ENCODE measurements at regions of chr14 and their contacts with region 1.

Region 1: DNA sequence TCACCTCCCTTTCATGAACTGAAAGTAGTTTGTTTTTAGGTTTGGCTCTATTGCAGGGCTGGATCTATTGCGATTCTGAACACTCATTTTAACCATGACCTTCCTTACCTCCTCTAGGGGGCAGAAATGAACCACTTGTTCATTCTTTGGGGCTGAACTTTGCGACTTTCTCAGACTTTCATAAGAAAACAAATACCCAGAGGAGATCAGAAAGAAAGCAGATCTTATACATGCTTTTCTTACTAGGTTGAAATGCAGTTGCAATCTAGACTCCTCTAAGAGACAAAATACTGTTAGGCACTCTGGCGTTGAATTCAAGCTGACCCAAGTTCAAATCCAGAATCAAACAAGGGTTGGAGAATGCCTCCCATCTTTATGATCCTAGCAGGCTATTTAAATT is 32.6 kb upstream of the PLEKHG3 start:
- DNase-seq: no peak
- ATAC-seq: peak; percentile 50 to 54
- H3K4me3 ChIP-seq: no peak overlapping the region
- H3K27ac ChIP-seq: no peak overlapping the region
- H3K4me1 ChIP-seq: peaks cover 0 to 7% of the 10 kb centered on the region in 2 donors
- H3K27me3 ChIP-seq: no peaks in the 10 kb centered on the region
- CTCF ChIP-seq: peak; percentile 33 to 68 (median 54)
- POLR2A ChIP-seq: no peak

Region 2: DNA sequence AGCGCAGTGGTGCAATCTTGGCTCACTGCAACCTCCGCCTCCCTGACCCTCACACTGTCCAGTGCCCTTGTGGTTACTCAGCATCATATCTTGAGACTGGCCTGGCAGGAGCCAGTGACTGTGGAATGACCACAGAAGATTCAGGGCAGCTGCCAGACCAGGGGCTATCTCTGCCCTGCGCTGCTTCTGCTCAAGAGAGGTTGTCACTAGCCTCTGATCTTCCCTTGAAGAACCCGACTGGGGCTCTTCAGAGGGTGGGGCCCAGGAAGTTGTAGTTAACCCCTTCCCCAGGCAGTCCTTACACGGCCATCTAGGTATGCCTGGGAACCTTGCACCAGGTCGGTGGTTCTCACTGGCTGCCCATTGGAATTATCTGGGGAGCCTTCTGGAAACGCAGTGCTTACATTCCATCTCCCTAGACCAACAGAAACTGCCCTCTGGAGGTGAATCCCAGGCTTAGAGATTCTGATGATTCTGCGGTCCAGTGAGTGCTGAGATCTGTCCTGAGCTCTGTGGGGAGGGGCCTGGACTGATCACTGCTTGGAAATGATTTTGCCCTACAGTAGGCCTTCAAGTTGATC is 74.0 kb after region 1 on chr14:
- in situ Hi-C with region 1: no loop called
- intact Hi-C with region 1: loop called (anchors 5 kb)
- DNase-seq: peak in 1 of 2 donors; percentile 46
- ATAC-seq: peak; percentile 20 to 71
- H3K4me3 ChIP-seq: no peak overlapping the region
- H3K27ac ChIP-seq: peak overlapping the region in 3 of 4 donors; percentile 12 to 52 (median 40)
- H3K4me1 ChIP-seq: peaks cover 10 to 11% of the 10 kb centered on the region in 2 donors
- H3K27me3 ChIP-seq: no peaks in the 10 kb centered on the region
- CTCF ChIP-seq: no peak
- POLR2A ChIP-seq: no peak

Region 3: GRCh38 chr14:64758691-64759584 is 87.3 kb after region 1 on chr14:
- in situ Hi-C with region 1: loop called (anchors 5 to 10 kb)
- intact Hi-C with region 1: loop called (anchors 2 kb)
- DNase-seq: no peak
- ATAC-seq: no peak
- H3K4me3 ChIP-seq: no peak overlapping the region
- H3K27ac ChIP-seq: peak overlapping the region in 2 of 4 donors; percentile 2 to 38
- H3K4me1 ChIP-seq: peaks cover 38 to 62% of the 10 kb centered on the region in 2 donors
- H3K27me3 ChIP-seq: no peaks in the 10 kb centered on the region
- CTCF ChIP-seq: no peak
- POLR2A ChIP-seq: no peak

Region 4: GRCh38 chr14:64764641-64765520 is 93.3 kb after region 1 on chr14:
- in situ Hi-C with region 1: loop called in 3 of 4 experiments (anchors 5 to 10 kb)
- intact Hi-C with region 1: loop called (anchors 2 kb)
- DNase-seq: peak in 1 of 2 donors; percentile 51
- ATAC-seq: peak in 1 of 2 donors; percentile 64
- H3K4me3 ChIP-seq: peak overlapping the region in 3 of 4 donors; percentile 16 to 37 (median 20)
- H3K27ac ChIP-seq: peak overlapping the region; percentile 39 to 74 (median 64)
- H3K4me1 ChIP-seq: peaks cover 16 to 27% of the 10 kb centered on the region in 2 donors
- H3K27me3 ChIP-seq: no peaks in the 10 kb centered on the region
- CTCF ChIP-seq: peak; percentile 74 to 89 (median 85)
- POLR2A ChIP-seq: no peak

Region 5: GRCh38 chr14:64880221-64881121 is 208.9 kb after region 1 on chr14:
- in situ Hi-C with region 1: loop called in 1 of 4 experiments (anchors 10 kb)
- intact Hi-C with region 1: no loop called
- DNase-seq: peak in 1 of 2 donors; percentile 38
- ATAC-seq: peak; percentile 16 to 29
- H3K4me3 ChIP-seq: peak overlapping the region; percentile 73 to 84 (median 75)
- H3K27ac ChIP-seq: peak overlapping the region; percentile 98 to 100 (median 98)
- H3K4me1 ChIP-seq: peaks cover 19 to 38% of the 10 kb centered on the region in 2 donors
- H3K27me3 ChIP-seq: peaks cover 0 to 2% (median 0%) of the 10 kb centered on the region in 3 donors
- CTCF ChIP-seq: peak in 1 of 5 experiments; percentile 29
- POLR2A ChIP-seq: no peak

Region 6: GRCh38 chr14:64891839-64892375 is 220.3 kb after region 1 on chr14:
- in situ Hi-C with region 1: loop called in 2 of 4 experiments (anchors 10 kb)
- intact Hi-C with region 1: loop called (anchors 5 kb)
- DNase-seq: no peak
- ATAC-seq: peak; percentile 98
- H3K4me3 ChIP-seq: no peak overlapping the region
- H3K27ac ChIP-seq: peak overlapping the region in 1 of 4 donors; percentile 18
- H3K4me1 ChIP-seq: peaks cover 0 to 12% of the 10 kb centered on the region in 2 donors
- H3K27me3 ChIP-seq: no peaks in the 10 kb centered on the region
- CTCF ChIP-seq: peak; percentile 60 to 84 (median 70)
- POLR2A ChIP-seq: no peak